Activated CD4-positive, alpha-beta memory T cell treated with anti-CD3 and anti-CD28 coated beads for 36 hours (primary cell): ENCODE measurements at regions of chr2 and their contacts with region 1.

Region 1: DNA sequence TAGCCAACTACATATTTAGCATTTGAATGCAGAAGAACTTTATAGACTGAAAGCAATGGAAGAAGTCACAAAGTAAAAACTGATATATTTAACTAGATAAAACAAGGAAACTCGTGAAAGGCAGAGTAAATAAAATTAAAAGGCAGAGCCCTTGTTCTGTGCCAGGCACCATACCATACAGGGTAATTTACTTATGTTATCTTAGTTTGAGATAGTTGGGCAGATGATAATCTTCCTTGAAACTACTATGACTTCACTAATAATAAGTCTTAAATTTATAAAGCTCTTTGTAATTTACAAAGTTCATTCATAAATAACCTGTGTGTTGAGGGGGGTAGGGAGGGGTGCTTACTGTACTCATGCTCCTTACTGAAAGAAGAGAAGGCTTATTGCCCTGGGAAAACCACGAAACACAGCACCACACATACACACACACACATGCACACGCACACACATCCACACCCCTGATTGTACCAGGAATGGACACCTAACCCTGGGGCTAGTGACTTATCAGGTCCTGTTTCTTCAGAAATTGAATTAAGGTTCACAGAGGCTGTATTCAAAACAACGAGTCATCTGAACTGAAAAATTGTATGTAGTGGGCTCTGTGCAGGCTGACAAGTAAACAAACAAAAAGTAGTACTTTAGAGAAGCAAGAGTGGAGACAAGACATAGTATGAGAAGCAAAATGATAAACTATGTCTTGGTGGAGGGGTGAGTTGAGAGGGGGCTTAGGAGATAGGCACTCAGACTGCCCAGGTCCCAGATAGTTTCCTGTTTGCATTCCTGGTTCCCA is 38.1 kb downstream of the AGFG1 start:
- DNase-seq: no peak
- H3K4me3 Mint-ChIP-seq: no peak overlapping the region
- H3K27ac Mint-ChIP-seq: no peak overlapping the region
- H3K4me1 Mint-ChIP-seq: peaks cover 83% of the 10 kb centered on the region
- H3K27me3 Mint-ChIP-seq: no peaks in the 10 kb centered on the region

Region 2: GRCh38 chr2:227324995-227325838 is 184.8 kb before region 1 on chr2 and contains the start of gene MFF:
- CTCF ChIA-PET with region 1: no interaction called
- POLR2A ChIA-PET with region 1: no interaction called
- intact Hi-C with region 1: no loop called
- DNase-seq: peak; percentile 97
- H3K4me3 Mint-ChIP-seq: peak within 1 kb of the TSS; percentile 90
- H3K27ac Mint-ChIP-seq: peak within 1 kb of the TSS; percentile 89
- H3K4me1 Mint-ChIP-seq: peaks cover 32% of the 10 kb centered on the region
- H3K27me3 Mint-ChIP-seq: no peaks in the 10 kb centered on the region
- total RNA-seq, gene MFF: 73.2 to 74.1 TPM

Region 3: DNA sequence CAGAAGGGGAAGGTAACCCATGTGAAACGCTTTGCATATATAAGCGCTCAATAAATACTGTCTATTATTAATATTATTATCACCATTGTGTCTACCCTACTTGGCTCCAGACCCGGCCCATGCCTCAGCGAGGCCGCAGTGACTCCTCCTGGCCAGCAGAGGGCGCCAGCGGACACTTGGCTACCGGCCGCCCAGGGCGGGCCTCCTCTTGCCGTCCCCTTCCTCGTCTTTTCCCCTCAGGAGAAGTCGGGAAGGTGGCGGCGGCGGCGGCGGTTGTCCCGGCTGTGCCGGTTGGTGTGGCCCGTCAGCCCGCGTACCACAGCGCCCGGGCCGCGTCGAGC is 38.1 kb before region 1 on chr2 and contains the start of gene AGFG1:
- CTCF ChIA-PET with region 1: no interaction called
- POLR2A ChIA-PET with region 1: no interaction called
- intact Hi-C with region 1: loop called (anchors 2 kb)
- DNase-seq: peak; percentile 90
- H3K4me3 Mint-ChIP-seq: peak within 1 kb of the TSS; percentile 82
- H3K27ac Mint-ChIP-seq: peak within 1 kb of the TSS; percentile 77
- H3K4me1 Mint-ChIP-seq: peaks cover 50% of the 10 kb centered on the region
- H3K27me3 Mint-ChIP-seq: no peaks in the 10 kb centered on the region
- total RNA-seq, gene AGFG1: 119 to 127 TPM